PC-9 (cell line): ENCODE measurements at regions of chr6 and their contacts with region 1.

Region 1: GRCh38 chr6:25992413-25993037 is 29.9 kb downstream of the TRIM38 start:
- DNase-seq: peak; percentile 77 to 99
- H3K4me3 ChIP-seq: peak overlapping the region; percentile 83
- H3K27ac ChIP-seq: peak overlapping the region; percentile 76
- H3K4me1 ChIP-seq: peaks cover 10% of the 10 kb centered on the region; the same call in 1 of the 2 replicates
- H3K27me3 ChIP-seq: no peaks in the 10 kb centered on the region
- CTCF ChIP-seq: peak; percentile 88

Region 2: DNA sequence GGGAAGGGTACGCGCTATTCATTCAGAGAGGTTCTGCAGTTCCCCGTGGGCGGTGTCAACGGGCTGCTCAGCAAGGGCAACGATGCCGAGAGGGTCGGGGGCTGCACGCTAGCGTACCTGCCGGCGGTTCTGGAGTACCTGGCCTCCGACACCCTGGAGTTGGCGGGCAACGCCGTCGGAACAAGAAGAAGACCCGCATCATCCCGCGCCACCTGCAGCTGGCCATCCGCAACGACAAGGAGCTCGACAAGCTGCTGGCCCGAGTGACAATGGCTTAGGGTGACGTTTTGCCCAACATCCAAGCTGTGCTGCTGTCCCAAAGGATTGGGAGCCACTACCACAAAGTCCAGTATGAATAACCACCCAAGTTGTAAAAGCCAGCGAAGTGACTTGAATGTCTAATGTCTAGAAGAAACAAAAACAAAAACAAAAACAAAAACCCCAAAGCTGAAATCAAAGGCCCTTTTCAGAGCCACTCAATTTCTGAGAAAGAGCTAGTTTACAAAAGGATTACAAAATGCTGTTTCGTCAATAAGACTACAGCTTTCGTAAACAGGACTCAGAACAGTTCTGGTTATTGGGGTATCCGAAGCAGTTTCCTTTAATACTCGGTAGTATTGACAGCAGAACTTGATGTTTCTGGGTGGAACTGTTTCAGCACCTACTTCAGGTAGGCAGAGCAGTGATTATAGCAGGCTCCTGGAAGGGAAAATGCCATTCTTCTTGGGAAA is 259.9 kb before region 1 on chr6:
- CTCF ChIA-PET with region 1: no interaction called
- POLR2A ChIA-PET with region 1: no interaction called
- intact Hi-C with region 1: no loop called
- DNase-seq: no peak
- H3K4me3 ChIP-seq: no peak overlapping the region
- H3K27ac ChIP-seq: no peak overlapping the region
- H3K4me1 ChIP-seq: no peaks in the 10 kb centered on the region
- H3K27me3 ChIP-seq: peaks cover 2% of the 10 kb centered on the region; the same call in 1 of the 2 replicates
- CTCF ChIP-seq: no peak

Region 3: GRCh38 chr6:25962149-25963127 is 30.1 kb before region 1 on chr6 and contains the start of gene TRIM38:
- CTCF ChIA-PET with region 1: interaction called, 5 read pairs
- POLR2A ChIA-PET with region 1: no interaction called
- intact Hi-C with region 1: loop called (anchors 1 kb)
- DNase-seq: peak; percentile 66 to 85
- H3K4me3 ChIP-seq: peak within 1 kb of the TSS; percentile 91
- H3K27ac ChIP-seq: peak within 1 kb of the TSS; percentile 91
- H3K4me1 ChIP-seq: peaks cover 16% of the 10 kb centered on the region
- H3K27me3 ChIP-seq: no peaks in the 10 kb centered on the region
- CTCF ChIP-seq: no peak
- total RNA-seq, gene TRIM38: 23.6 and 31.3 TPM in 2 replicates

Region 4: GRCh38 chr6:26054857-26055669 is 62.5 kb after region 1 on chr6:
- CTCF ChIA-PET with region 1: no interaction called
- POLR2A ChIA-PET with region 1: no interaction called
- intact Hi-C with region 1: loop called (anchors 2 kb)
- DNase-seq: peak; percentile 79 to 94
- H3K4me3 ChIP-seq: peak overlapping the region; percentile 79
- H3K27ac ChIP-seq: peak overlapping the region; percentile 95
- H3K4me1 ChIP-seq: peaks cover 26% of the 10 kb centered on the region
- H3K27me3 ChIP-seq: no peaks in the 10 kb centered on the region
- CTCF ChIP-seq: 0 out of 2 replicates have a peak, but pooled peaks have one; percentile 16